Activated CD8-positive, alpha-beta memory T cell treated with anti-CD3 and anti-CD28 coated beads, Interleukin-2, amount 10 ng/mL, durations not matched to agents 7 days and 5 days (primary cell): ENCODE measurements at regions of chr1 and their contacts with region 1.

Region 1: GRCh38 chr1:45512641-45513054 is 9.0 kb downstream of the PRDX1 start:
- DNase-seq: peak; percentile 77
- ATAC-seq: peak; percentile 64
- H3K4me3 Mint-ChIP-seq: no peak overlapping the region
- H3K27ac Mint-ChIP-seq: no peak overlapping the region
- H3K4me1 Mint-ChIP-seq: peaks cover 7% of the 10 kb centered on the region
- H3K27me3 Mint-ChIP-seq: no peaks in the 10 kb centered on the region

Region 2: GRCh38 chr1:45499415-45499769 is 13.3 kb before region 1 on chr1:
- CTCF ChIA-PET with region 1: interaction called, 13 read pairs
- DNase-seq: peak; percentile 51
- ATAC-seq: peak; percentile 3
- H3K4me3 Mint-ChIP-seq: peak overlapping the region; percentile 95
- H3K27ac Mint-ChIP-seq: peak overlapping the region; percentile 93
- H3K4me1 Mint-ChIP-seq: peaks cover 39% of the 10 kb centered on the region
- H3K27me3 Mint-ChIP-seq: no peaks in the 10 kb centered on the region

Region 3: DNA sequence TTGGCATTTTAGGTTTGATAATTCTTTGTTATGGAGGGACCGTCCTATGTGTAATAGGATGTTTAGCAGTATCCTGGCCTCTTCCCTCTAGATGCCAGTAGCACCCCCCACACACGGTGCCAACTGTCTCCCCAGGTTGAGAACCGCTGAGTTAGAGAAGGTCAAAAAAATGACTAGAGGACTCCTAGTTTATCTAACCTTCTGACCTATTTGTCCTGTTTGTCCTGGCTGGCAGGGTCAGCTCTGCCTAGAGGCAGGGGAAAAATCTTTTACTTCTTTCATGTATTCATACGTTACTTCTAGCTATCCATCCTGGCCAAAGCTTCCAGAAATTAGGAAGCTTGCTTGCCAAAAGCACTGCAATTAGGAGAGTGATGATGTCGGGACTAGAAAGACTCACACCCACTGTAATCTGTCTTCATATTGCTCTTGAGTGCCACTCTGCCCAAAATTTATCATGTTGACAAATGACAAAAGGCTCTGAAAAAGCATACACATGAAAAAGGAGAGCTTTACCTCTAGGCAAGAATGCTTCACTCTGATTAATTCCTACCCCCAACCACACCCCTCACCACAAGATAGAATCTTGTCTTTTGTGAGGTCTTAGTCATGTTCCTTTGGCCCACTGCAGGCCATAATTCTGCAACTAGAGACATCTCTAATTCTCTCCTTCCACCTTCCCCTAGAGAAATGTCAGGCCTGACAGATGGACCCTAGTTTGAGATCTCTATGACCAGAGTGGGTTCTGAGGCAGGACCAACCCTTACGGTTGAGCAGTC is 23.5 kb after region 1 on chr1:
- CTCF ChIA-PET with region 1: interaction called, 11 read pairs
- DNase-seq: no peak
- ATAC-seq: peak; percentile 77
- H3K4me3 Mint-ChIP-seq: no peak overlapping the region
- H3K27ac Mint-ChIP-seq: no peak overlapping the region
- H3K4me1 Mint-ChIP-seq: peaks cover 18% of the 10 kb centered on the region
- H3K27me3 Mint-ChIP-seq: peaks cover 31% of the 10 kb centered on the region

Region 4: DNA sequence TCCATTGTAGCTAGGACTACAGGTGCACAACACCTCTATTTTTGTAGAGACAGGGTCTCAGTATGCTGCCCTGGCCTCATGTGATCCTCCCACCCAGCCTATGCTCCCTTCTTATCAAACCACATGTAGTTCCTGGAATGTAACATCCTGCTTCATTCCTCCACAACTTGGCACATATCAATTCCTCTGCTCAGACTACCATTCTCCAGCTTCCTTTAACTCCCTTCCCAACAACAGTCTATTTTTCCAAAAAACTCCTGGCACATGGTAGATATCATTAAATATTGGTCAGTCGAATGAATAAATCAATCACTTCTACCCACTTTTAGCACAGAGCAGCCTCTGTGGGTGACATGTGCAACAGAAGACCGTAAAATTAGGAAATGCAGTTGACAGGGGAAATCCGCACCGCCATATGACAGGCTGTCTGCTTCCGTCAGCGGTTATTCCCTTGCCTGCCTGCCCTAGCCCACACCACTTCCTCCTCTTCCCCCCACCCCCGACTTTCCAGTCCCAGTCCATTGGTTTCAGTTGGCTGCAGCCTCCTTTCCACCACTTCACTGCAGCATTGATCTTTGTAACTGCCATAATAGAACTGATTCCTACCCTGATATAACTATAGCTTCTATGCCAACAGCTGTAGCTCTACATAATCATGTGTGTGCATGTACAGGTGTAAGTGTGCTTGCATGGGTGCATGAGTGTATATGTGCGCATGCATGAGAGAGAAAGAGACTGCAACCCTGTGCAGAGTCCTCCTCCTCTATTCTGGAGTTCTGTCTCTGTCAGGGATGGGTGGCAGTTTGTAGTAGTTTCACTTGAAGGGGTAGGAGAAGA is 31.2 kb after region 1 on chr1:
- CTCF ChIA-PET with region 1: interaction called, 14 read pairs
- DNase-seq: peak; percentile 83
- ATAC-seq: peak; percentile 86
- H3K4me3 Mint-ChIP-seq: peak overlapping the region; percentile 11
- H3K27ac Mint-ChIP-seq: peak overlapping the region; percentile 3
- H3K4me1 Mint-ChIP-seq: peaks cover 29% of the 10 kb centered on the region
- H3K27me3 Mint-ChIP-seq: peaks cover 37% of the 10 kb centered on the region

Region 5: GRCh38 chr1:45550401-45551351 is 38.0 kb after region 1 on chr1 and contains the start of gene AKR1A1:
- CTCF ChIA-PET with region 1: interaction called, 15 read pairs
- DNase-seq: peak; percentile 92
- ATAC-seq: peak; percentile 96
- H3K4me3 Mint-ChIP-seq: peak within 1 kb of the TSS; percentile 92
- H3K27ac Mint-ChIP-seq: peak within 1 kb of the TSS; percentile 88
- H3K4me1 Mint-ChIP-seq: peaks cover 22% of the 10 kb centered on the region
- H3K27me3 Mint-ChIP-seq: peaks cover 12% of the 10 kb centered on the region
- total RNA-seq, gene AKR1A1: 137 to 150 TPM